PC-9 (cell line): ENCODE measurements at regions of chr3 and their contacts with region 1.

Region 1: DNA sequence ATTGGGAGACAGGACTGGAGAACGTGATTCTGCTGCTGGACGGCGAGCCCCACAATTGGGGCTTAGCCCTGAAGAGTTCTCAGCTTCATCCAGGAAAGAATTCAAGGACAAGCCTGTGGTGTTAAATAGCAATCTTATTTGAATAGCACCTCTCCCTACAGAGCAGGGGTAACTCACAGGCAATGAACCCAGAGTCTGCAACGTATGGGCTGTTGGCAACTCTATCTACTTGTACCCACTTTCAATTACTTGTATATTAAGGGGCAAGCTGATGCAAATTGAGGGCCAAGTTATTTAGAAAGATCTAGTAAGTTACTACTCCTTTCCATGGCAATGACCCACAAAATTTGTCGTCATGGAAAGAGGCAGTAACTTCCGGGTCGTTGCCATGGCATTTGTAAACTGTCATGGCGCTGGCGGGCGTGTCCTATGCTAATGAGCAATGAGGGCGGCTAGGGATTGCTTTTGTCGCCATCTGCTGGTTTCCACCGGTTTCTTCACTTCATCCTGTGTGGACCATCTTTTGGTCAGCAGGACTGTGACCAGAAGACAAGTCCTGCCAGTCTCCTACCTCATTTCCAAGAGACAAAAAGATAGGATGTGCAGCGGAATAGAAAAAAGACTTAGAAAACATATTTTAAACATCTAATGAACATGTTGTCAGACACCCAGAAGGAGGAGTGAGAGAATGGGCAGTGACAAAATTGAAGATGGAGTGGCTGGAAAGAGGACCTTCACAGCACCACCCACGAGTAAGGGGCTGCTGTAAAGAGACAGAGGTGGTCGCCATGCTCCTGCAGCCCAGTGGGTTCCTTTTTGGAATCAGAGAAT is 45.8 kb upstream of the SH3BP5 start:
- DNase-seq: peak; percentile 71 to 84
- H3K4me3 ChIP-seq: 0 out of 2 replicates have a peak overlapping the region, but pooled peaks have one; percentile 8
- H3K27ac ChIP-seq: peak overlapping the region; percentile 51
- H3K4me1 ChIP-seq: peaks cover 5% of the 10 kb centered on the region
- H3K27me3 ChIP-seq: no peaks in the 10 kb centered on the region
- CTCF ChIP-seq: peak; percentile 90

Region 2: DNA sequence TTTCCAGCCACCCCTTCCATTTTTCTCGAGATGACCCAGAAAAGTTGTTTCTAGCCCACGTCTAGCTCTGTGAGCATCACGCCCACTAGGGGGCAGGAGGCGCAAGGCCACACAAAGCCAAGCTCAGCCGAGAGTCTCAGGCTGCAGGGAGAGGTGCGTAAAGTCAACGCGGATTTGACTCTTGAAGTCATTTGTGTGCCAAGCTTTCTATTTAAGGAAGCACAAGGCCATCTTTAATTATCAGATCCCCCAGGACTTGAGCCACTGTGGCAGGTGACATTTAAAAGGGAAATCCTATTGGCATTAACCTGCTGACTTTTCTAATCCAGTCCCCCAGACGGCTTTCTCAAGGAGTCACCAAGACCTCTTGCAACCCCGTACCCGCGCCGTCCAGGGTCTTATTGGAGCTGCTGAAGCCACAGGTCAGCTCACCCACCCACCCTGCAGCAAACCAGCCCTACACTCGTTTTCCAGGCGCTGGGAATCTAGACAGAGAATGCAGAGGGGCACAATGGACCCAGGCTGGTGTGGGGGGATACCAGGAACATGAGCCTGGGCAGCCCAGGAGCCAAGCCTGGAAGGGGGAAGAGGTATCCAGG is 110.0 kb before region 1 on chr3:
- CTCF ChIA-PET with region 1: interaction called, 6 read pairs
- POLR2A ChIA-PET with region 1: no interaction called
- intact Hi-C with region 1: loop called (anchors 1 kb)
- DNase-seq: peak; percentile 49 to 72
- H3K4me3 ChIP-seq: no peak overlapping the region
- H3K27ac ChIP-seq: no peak overlapping the region
- H3K4me1 ChIP-seq: peaks cover 27% of the 10 kb centered on the region
- H3K27me3 ChIP-seq: no peaks in the 10 kb centered on the region
- CTCF ChIP-seq: peak; percentile 97

Region 3: DNA sequence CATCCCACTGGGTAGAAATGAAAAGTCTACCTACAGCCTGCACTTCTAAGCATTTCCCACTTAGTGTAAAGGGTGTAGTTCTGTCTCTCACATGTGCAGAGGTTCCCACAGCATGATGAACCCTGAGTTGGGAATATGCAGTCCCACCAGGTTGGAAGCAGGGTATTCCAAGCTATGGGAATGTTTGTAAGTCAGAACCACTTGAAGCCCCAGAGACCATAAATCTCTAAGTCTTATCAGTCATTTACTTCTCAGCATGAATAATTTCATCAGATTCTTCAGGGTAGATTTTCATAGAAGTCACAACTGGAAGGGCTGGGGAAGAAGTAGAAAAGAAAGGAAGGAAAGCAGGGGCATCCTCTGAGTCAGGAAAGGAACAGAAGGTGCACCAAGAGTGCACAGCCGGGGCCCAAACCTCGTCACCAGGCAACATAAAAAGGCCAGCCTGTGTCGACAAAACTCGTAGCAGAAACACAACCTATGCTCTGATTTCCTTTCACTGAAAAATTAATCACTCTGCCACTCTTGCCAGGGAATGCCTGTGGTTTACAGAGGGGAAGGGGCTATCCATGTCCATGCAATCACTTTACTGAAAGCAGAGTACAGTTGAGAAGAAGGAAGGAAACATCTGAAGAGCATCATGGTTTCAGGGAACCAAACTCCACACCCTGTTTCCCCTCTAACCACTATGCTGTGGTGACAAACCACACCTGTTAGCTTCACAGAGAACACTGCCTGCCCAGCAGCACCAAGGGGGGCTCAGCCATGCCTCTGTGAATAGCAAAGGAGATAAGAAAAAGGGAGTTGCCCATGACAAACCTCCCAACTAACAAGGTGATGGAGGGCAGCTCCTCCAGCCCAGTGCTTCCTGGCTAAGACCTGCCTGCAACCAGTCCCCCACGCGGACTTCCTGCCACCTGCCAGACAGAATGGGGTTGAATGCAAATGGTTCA is 86.3 kb before region 1 on chr3:
- CTCF ChIA-PET with region 1: no interaction called
- POLR2A ChIA-PET with region 1: no interaction called
- intact Hi-C with region 1: loop called (anchors 1 kb)
- DNase-seq: peak in 1 of 2 experiments; percentile 30
- H3K4me3 ChIP-seq: no peak overlapping the region; the same call in 1 of the 2 replicates
- H3K27ac ChIP-seq: peak overlapping the region; percentile 71
- H3K4me1 ChIP-seq: peaks cover 28% of the 10 kb centered on the region
- H3K27me3 ChIP-seq: no peaks in the 10 kb centered on the region
- CTCF ChIP-seq: no peak

Region 4: GRCh38 chr3:15309662-15310335 is 68.4 kb before region 1 on chr3:
- CTCF ChIA-PET with region 1: no interaction called
- POLR2A ChIA-PET with region 1: no interaction called
- intact Hi-C with region 1: loop called (anchors 5 kb)
- DNase-seq: no peak
- H3K4me3 ChIP-seq: peak overlapping the region; percentile 3; the same call in 1 of the 2 replicates
- H3K27ac ChIP-seq: peak overlapping the region; percentile 82
- H3K4me1 ChIP-seq: peaks cover 37% of the 10 kb centered on the region
- H3K27me3 ChIP-seq: no peaks in the 10 kb centered on the region
- CTCF ChIP-seq: no peak

Region 5: GRCh38 chr3:15332405-15333098 is 45.6 kb before region 1 on chr3 and contains the start of gene SH3BP5:
- CTCF ChIA-PET with region 1: no interaction called
- POLR2A ChIA-PET with region 1: no interaction called
- intact Hi-C with region 1: loop called (anchors 1 kb)
- DNase-seq: peak; percentile 36 to 76
- H3K4me3 ChIP-seq: peak within 1 kb of the TSS; percentile 95
- H3K27ac ChIP-seq: peak within 1 kb of the TSS; percentile 43; the same call in 1 of the 2 replicates
- H3K4me1 ChIP-seq: peaks cover 68% of the 10 kb centered on the region
- H3K27me3 ChIP-seq: no peaks in the 10 kb centered on the region
- CTCF ChIP-seq: peak; percentile 69
- total RNA-seq, gene SH3BP5: 31.6 and 39.3 TPM in 2 replicates

Region 6: GRCh38 chr3:15342246-15342645 is 35.9 kb before region 1 on chr3:
- CTCF ChIA-PET with region 1: interaction called, 11 read pairs
- POLR2A ChIA-PET with region 1: no interaction called
- intact Hi-C with region 1: no loop called
- DNase-seq: no peak
- H3K4me3 ChIP-seq: no peak overlapping the region
- H3K27ac ChIP-seq: no peak overlapping the region
- H3K4me1 ChIP-seq: peaks cover 12% of the 10 kb centered on the region
- H3K27me3 ChIP-seq: no peaks in the 10 kb centered on the region
- CTCF ChIP-seq: no peak

Region 7: DNA sequence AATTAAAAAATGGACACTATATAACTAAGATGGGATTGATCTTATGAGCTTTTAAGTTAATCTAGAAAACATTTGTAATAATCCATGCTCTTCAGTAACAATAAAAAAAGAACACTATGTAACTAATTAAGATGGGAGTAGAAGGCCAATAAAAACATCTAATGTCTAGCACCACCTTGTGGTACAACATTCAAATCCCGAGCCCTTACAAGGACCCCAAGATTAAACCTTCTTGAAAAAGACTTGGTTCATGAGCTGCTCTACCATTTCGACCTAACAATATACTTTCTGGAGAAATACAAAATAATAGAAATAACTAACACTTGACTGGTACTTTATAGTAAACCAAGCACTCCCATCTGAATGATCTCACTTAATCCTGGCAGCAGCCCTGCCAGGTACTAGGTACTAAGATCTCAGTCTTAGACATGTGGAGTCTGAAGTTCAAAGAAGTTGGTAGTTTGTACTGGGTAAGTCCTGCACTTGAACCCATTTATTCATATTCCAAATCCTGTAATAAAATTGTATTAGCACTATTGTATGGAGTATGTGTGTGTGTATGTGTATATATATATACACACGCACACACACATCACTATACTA is 27.4 kb after region 1 on chr3:
- CTCF ChIA-PET with region 1: no interaction called
- POLR2A ChIA-PET with region 1: no interaction called
- intact Hi-C with region 1: loop called (anchors 2 kb)
- DNase-seq: no peak
- H3K4me3 ChIP-seq: no peak overlapping the region
- H3K27ac ChIP-seq: no peak overlapping the region
- H3K4me1 ChIP-seq: peaks cover 8% of the 10 kb centered on the region; the same call in 1 of the 2 replicates
- H3K27me3 ChIP-seq: no peaks in the 10 kb centered on the region
- CTCF ChIP-seq: peak; percentile 84

Region 8: GRCh38 chr3:15726043-15726442 is 347.9 kb after region 1 on chr3:
- CTCF ChIA-PET with region 1: no interaction called
- POLR2A ChIA-PET with region 1: no interaction called
- intact Hi-C with region 1: no loop called
- DNase-seq: no peak
- H3K4me3 ChIP-seq: no peak overlapping the region
- H3K27ac ChIP-seq: no peak overlapping the region
- H3K4me1 ChIP-seq: no peaks in the 10 kb centered on the region
- H3K27me3 ChIP-seq: no peaks in the 10 kb centered on the region
- CTCF ChIP-seq: no peak